Right ventricle myocardium inferior (tissue), 1 donor: ENCODE measurements at regions of chr2 and their contacts with region 1.

Region 1: GRCh38 chr2:85707304-85707703 is 13.1 kb downstream of the GNLY start:
- DNase-seq: no peak
- ATAC-seq: no peak

Region 2: DNA sequence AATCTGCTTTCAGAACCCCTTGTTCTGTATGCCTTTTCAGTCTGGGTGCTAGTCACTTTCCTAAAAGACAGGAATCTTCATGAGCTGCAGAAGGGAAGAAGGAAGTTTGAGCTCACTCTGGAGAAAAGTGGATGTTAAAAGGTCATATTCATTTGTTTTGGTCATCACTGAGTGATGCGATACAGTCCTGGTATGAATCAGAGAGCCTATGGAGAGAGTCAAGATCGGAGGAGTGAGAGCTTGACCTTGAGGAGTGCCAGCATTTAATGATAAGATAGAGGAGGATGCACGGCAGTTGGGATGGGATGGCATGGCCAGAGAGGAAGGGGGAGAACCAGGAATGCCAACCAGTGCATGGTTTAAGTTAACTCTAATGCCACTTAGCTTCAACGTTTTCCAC is 71.7 kb before region 1 on chr2:
- intact Hi-C with region 1: loop called (anchors 5 kb)
- DNase-seq: no peak
- ATAC-seq: no peak

Region 3: DNA sequence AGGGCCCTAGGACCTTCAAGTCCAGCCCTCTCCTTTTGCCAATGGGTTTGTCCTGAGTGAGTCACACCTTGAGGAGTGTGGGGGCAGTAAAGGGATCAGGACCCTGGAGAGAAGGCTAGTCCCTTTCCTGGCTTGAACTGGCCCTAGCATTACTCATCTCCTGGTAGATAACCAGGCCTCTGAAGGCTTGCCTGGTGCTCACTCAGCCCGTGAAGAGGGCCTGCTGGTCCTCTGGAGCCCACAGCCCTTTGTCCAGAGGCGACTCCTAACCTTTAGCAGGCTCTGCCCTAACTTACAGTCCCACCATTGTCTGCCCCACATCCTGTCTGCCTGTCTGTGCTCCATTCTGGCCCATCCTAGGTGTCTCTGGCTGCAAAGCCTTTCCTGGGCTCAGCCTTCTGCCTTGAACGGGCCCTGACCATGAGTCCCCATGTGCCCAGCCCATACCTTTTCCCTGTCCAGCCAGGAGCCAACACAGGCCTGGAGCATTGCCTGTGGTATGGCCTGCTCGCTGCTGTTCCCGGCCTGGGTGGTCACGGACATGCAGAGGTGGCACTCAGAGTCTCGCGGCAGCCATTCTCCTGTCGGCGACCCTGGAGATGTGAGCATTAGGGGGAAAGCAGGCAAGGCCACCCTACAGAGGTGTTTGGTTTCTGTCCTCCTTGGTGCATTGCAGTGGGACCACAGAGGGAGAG is 44.3 kb before region 1 on chr2:
- intact Hi-C with region 1: loop called (anchors 5 kb)
- DNase-seq: no peak
- ATAC-seq: peak; percentile 42

Region 4: DNA sequence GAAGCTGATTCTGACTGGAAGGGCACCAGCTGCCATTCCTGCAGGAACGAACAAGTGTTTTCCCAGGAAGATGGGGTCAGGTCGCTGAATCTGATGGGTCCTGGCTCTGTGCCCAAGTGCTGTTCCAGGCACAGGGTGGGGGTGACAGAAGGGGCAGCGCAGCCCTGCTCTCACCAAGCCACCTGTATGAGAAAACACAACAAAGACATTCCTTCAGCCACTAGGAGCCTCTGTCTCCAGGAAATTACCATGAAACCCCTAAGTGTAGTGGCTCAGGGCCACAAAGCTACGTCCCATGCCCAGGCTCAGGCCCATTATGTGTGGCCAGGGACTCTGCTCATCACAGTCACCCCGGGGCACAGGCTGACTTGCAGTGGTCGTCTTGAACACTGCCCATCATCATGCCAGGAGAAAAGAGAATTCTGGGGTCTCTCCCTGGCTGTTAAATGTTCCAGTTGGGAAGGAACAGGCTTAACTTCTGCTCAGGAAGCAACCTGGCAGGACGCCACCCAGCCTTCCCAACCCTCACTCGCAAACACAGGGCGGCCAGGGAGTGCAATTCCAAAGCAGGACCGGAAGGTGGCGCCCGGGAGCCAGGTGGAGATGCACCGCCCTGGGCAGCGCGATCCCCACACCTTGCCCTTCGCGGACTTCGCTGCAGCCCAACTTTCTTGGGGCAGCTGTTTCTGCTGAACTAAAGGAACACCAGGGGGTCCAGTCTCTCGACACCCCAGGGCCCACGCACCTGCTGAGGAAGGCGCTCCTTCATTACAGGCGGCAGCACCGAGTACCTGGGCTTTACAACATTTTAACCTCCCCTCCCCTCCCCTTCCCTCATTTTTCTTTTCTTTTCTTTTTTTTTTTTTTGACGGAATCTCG is 28.3 kb before region 1 on chr2:
- intact Hi-C with region 1: loop called (anchors 1 kb)
- DNase-seq: peak; percentile 95
- ATAC-seq: peak; percentile 90

Region 5: GRCh38 chr2:85750587-85751575 is 43.6 kb after region 1 on chr2:
- intact Hi-C with region 1: no loop called
- DNase-seq: no peak
- ATAC-seq: peak; percentile 59

Region 6: GRCh38 chr2:85797921-85798320 is 90.6 kb after region 1 on chr2:
- intact Hi-C with region 1: loop called (anchors 1 kb)
- DNase-seq: no peak
- ATAC-seq: peak; percentile 34